Calu3 (cell line): ENCODE measurements at regions of chr14 and their contacts with region 1.

Region 1: GRCh38 chr14:57493467-57494181 is at the start of gene CCDC198:
- DNase-seq: peak; percentile 71
- H3K4me3 Mint-ChIP-seq: peak within 1 kb of the TSS; percentile 82
- H3K27ac Mint-ChIP-seq: peak within 1 kb of the TSS; percentile 97
- H3K4me1 Mint-ChIP-seq: peaks cover 16% of the 10 kb centered on the region
- H3K27me3 Mint-ChIP-seq: no peaks in the 10 kb centered on the region
- CTCF ChIP-seq: no peak
- total RNA-seq, gene CCDC198: 58.7 and 81.3 TPM in 2 replicates

Region 2: GRCh38 chr14:57747036-57747435 is 253.4 kb after region 1 on chr14:
- CTCF ChIA-PET with region 1: interaction called, 4 read pairs
- intact Hi-C with region 1: loop called (anchors 5 kb)
- DNase-seq: peak; percentile 56
- H3K4me3 Mint-ChIP-seq: no peak overlapping the region
- H3K27ac Mint-ChIP-seq: no peak overlapping the region
- H3K4me1 Mint-ChIP-seq: peaks cover 22% of the 10 kb centered on the region
- H3K27me3 Mint-ChIP-seq: no peaks in the 10 kb centered on the region
- CTCF ChIP-seq: no peak